Activated naive CD4-positive, alpha-beta T cell treated with anti-CD3 and anti-CD28 coated beads for 36 hours (primary cell): ENCODE measurements at regions of chr2 and their contacts with region 1.

Region 1: DNA sequence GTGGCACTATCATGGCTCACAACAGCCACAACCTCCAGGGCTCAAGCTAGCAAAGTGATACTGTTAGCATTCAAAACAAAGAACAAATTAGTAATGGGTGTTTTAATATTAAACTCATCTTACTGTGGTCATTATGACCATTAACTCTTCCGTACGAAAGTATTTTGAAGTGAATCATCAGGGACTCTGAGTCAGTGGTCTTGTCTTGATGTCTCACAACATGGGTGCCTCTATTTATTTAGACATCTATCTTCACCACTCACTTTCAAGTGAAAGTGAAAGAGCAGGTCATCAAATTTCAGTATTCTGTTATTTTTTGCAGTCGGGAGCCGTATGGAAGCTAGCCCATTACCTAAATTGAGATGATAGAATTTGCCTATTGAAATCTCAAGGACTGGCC is 1118.2 kb downstream of the DPP10 start:
- DNase-seq: no peak
- H3K4me3 Mint-ChIP-seq: no peak overlapping the region
- H3K27ac Mint-ChIP-seq: no peak overlapping the region
- H3K4me1 Mint-ChIP-seq: no peaks in the 10 kb centered on the region
- H3K27me3 Mint-ChIP-seq: no peaks in the 10 kb centered on the region

Region 2: DNA sequence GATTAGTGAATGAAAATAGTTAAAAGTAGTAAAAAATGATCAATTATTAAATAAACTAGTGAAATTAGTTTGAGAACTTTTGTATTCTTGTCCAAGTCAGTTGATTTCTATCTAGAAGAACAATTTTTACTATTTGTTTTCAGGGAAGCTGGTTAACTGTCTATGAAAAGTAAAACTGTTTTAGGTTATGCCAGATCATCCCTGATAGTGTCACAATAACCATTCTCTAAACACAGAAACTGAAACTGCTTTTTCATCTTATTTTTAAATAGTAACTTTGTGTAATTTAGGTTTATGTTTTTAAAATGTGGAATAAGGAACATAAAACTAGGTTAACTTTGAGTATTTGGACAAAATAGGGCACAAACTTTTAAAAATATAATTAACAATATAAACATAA is 31.0 kb before region 1 on chr2:
- CTCF ChIA-PET with region 1: no interaction called
- intact Hi-C with region 1: loop called (anchors 5 kb)
- DNase-seq: no peak
- H3K4me3 Mint-ChIP-seq: no peak overlapping the region
- H3K27ac Mint-ChIP-seq: no peak overlapping the region
- H3K4me1 Mint-ChIP-seq: no peaks in the 10 kb centered on the region
- H3K27me3 Mint-ChIP-seq: no peaks in the 10 kb centered on the region

Region 3: GRCh38 chr2:115678129-115678528 is 117.5 kb after region 1 on chr2:
- CTCF ChIA-PET with region 1: no interaction called
- intact Hi-C with region 1: no loop called
- DNase-seq: no peak
- H3K4me3 Mint-ChIP-seq: no peak overlapping the region
- H3K27ac Mint-ChIP-seq: no peak overlapping the region
- H3K4me1 Mint-ChIP-seq: no peaks in the 10 kb centered on the region
- H3K27me3 Mint-ChIP-seq: no peaks in the 10 kb centered on the region